CD4-positive, alpha-beta memory T cell (primary cell): ENCODE measurements at regions of chr11 and their contacts with region 1.

Region 1: GRCh38 chr11:121494355-121495099 is 41.8 kb upstream of the SORL1-AS1 start:
- DNase-seq: peak; percentile 23 to 43 (median 27)
- H3K4me3 ChIP-seq: no peak overlapping the region
- H3K4me3 Mint-ChIP-seq: peak overlapping the region; percentile 18 to 82 (median 58)
- H3K27ac ChIP-seq: no peak overlapping the region
- H3K27ac Mint-ChIP-seq: peak overlapping the region; percentile 48 to 90 (median 79)
- H3K4me1 ChIP-seq: peaks cover 30% of the 10 kb centered on the region
- H3K4me1 Mint-ChIP-seq: peaks cover 49 to 82% (median 62%) of the 10 kb centered on the region in 4 donors
- H3K27me3 ChIP-seq: no peaks in the 10 kb centered on the region
- H3K27me3 Mint-ChIP-seq: no peaks in the 10 kb centered on the region

Region 2: GRCh38 chr11:121437018-121437685 is 57.4 kb before region 1 on chr11:
- CTCF ChIA-PET with region 1: no interaction called
- POLR2A ChIA-PET with region 1: no interaction called
- intact Hi-C with region 1: no loop called
- DNase-seq: no peak
- H3K4me3 ChIP-seq: no peak overlapping the region
- H3K4me3 Mint-ChIP-seq: no peak overlapping the region
- H3K27ac ChIP-seq: no peak overlapping the region
- H3K27ac Mint-ChIP-seq: peak overlapping the region in 1 of 7 donors; percentile 7
- H3K4me1 ChIP-seq: peaks cover 21% of the 10 kb centered on the region
- H3K4me1 Mint-ChIP-seq: peaks cover 15 to 59% (median 35%) of the 10 kb centered on the region in 4 donors
- H3K27me3 ChIP-seq: no peaks in the 10 kb centered on the region
- H3K27me3 Mint-ChIP-seq: no peaks in the 10 kb centered on the region

Region 3: GRCh38 chr11:121482231-121483129 is 12.0 kb before region 1 on chr11:
- CTCF ChIA-PET with region 1: interaction called, 11 read pairs
- POLR2A ChIA-PET with region 1: interaction called, 16 read pairs
- intact Hi-C with region 1: no loop called
- DNase-seq: peak; percentile 67 to 89 (median 72)
- H3K4me3 ChIP-seq: peak overlapping the region; percentile 14 to 30
- H3K4me3 Mint-ChIP-seq: peak overlapping the region; percentile 75 to 86 (median 82)
- H3K27ac ChIP-seq: peak overlapping the region; percentile 53
- H3K27ac Mint-ChIP-seq: peak overlapping the region; percentile 87 to 97 (median 92)
- H3K4me1 ChIP-seq: peaks cover 71% of the 10 kb centered on the region
- H3K4me1 Mint-ChIP-seq: peaks cover 48 to 85% (median 68%) of the 10 kb centered on the region in 4 donors
- H3K27me3 ChIP-seq: no peaks in the 10 kb centered on the region
- H3K27me3 Mint-ChIP-seq: no peaks in the 10 kb centered on the region

Region 4: DNA sequence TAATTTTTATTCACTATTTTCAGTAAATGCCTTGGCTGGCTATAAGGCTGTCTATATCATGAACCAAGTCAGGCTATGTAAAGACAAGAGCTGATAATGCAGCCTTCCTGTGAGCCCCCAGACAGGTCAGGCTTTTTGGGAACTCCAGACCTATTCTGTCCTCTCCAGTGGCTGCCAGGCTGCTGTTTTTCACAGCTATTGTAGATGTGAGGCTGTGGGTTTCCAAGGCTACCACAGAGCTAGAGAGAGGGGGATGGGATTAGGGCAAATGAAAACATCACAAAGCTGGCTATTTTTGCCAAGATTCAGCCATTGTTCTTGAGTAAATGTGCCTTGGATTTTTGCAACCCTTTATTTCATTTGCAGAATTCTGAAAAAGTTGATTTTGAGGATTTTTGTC is 13.9 kb after region 1 on chr11:
- CTCF ChIA-PET with region 1: interaction called, 3 read pairs
- POLR2A ChIA-PET with region 1: interaction called, 6 read pairs
- intact Hi-C with region 1: loop called (anchors 2 kb)
- DNase-seq: no peak
- H3K4me3 ChIP-seq: no peak overlapping the region
- H3K4me3 Mint-ChIP-seq: peak overlapping the region in 2 of 8 donors; percentile 8 to 27
- H3K27ac ChIP-seq: no peak overlapping the region
- H3K27ac Mint-ChIP-seq: peak overlapping the region in 4 of 7 donors; percentile 17 to 72 (median 61)
- H3K4me1 ChIP-seq: peaks cover 24% of the 10 kb centered on the region
- H3K4me1 Mint-ChIP-seq: peaks cover 19 to 82% (median 53%) of the 10 kb centered on the region in 4 donors
- H3K27me3 ChIP-seq: no peaks in the 10 kb centered on the region
- H3K27me3 Mint-ChIP-seq: no peaks in the 10 kb centered on the region